Mammary epithelial cell (primary cell): ENCODE measurements at regions of chr11 and their contacts with region 1.

Region 1: DNA sequence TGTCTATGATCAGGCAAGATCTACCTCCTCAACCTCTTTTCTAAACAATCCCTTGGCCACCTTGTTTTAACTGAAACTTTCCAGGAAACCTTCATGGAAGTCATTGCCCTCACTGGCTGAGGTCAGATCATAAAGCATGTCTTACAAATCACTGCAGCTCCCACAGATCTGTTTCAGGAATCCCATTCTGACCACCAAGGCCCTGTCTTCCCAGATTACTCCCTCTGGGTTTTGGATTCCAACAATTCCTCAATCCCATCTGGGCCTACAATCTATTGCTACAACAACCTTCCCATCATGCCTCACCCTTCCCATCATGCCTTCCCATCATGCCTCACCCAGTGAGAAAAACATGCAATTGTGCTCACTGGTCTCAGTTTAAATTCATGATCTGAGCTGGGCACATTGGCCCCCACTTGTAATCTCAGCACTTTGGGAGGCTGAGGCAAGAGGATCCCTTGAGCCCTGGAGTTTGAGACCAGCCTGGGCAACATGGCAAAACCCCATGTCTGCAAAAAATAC is 15.9 kb downstream of the ADAMTS15 start:
- DNase-seq: no peak
- H3K4me3 ChIP-seq: no peak overlapping the region
- H3K27ac ChIP-seq: no peak overlapping the region
- H3K4me1 ChIP-seq: no peaks in the 10 kb centered on the region
- H3K27me3 ChIP-seq: no peaks in the 10 kb centered on the region
- CTCF ChIP-seq: no peak

Region 2: DNA sequence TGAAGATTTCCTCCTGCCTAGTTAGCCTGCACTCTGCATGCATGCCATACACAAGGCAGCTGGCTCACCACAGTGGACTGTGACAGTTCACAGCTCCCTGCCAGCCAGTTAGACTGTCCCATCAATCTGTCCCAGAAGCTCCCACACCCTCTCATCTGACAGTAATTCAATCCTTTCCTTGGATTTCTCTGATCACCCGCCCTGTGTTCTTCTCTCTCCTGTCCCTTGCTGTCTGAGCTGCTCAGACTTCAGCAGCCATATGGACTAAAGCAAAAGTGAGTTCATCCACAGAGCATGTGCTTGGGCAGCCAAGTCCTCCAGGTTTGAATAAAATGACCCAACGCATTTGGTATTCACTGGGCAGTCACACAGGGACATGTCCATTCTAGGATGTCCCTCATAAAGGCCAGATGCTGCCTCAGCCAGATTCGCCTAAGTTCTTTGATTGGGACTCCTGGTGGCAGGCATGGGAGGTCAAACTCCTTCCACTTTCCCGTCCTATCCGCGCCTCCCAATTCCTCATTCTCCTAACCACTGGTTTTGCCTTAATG is 95.1 kb before region 1 on chr11:
- CTCF ChIA-PET with region 1: no interaction called
- dilution Hi-C with region 1: no loop called
- in situ Hi-C with region 1: no loop called
- intact Hi-C with region 1: no loop called
- DNase-seq: no peak
- H3K4me3 ChIP-seq: no peak overlapping the region
- H3K27ac ChIP-seq: no peak overlapping the region
- H3K4me1 ChIP-seq: no peaks in the 10 kb centered on the region
- H3K27me3 ChIP-seq: peaks cover 3% of the 10 kb centered on the region
- CTCF ChIP-seq: peak; percentile 3 to 25

Region 3: GRCh38 chr11:130536106-130537040 is 72.0 kb after region 1 on chr11:
- CTCF ChIA-PET with region 1: no interaction called
- dilution Hi-C with region 1: loop called (anchors 5 kb)
- in situ Hi-C with region 1: no loop called
- intact Hi-C with region 1: no loop called
- DNase-seq: peak; percentile 58
- H3K4me3 ChIP-seq: no peak overlapping the region
- H3K27ac ChIP-seq: no peak overlapping the region
- H3K4me1 ChIP-seq: peaks cover 8% of the 10 kb centered on the region
- H3K27me3 ChIP-seq: no peaks in the 10 kb centered on the region
- CTCF ChIP-seq: no peak